Endothelial cell of umbilical vein (primary cell): ENCODE measurements at regions of chr6 and their contacts with region 1.

Region 1: GRCh38 chr6:159008656-159009288 is 8.8 kb upstream of the RSPH3 start:
- DNase-seq: peak; percentile 30
- H3K4me3 ChIP-seq: no peak overlapping the region
- H3K27ac ChIP-seq: no peak overlapping the region
- H3K4me1 ChIP-seq: no peaks in the 10 kb centered on the region
- H3K27me3 ChIP-seq: no peaks in the 10 kb centered on the region
- CTCF ChIP-seq: peak; percentile 14 to 21
- POLR2A ChIP-seq: no peak

Region 2: DNA sequence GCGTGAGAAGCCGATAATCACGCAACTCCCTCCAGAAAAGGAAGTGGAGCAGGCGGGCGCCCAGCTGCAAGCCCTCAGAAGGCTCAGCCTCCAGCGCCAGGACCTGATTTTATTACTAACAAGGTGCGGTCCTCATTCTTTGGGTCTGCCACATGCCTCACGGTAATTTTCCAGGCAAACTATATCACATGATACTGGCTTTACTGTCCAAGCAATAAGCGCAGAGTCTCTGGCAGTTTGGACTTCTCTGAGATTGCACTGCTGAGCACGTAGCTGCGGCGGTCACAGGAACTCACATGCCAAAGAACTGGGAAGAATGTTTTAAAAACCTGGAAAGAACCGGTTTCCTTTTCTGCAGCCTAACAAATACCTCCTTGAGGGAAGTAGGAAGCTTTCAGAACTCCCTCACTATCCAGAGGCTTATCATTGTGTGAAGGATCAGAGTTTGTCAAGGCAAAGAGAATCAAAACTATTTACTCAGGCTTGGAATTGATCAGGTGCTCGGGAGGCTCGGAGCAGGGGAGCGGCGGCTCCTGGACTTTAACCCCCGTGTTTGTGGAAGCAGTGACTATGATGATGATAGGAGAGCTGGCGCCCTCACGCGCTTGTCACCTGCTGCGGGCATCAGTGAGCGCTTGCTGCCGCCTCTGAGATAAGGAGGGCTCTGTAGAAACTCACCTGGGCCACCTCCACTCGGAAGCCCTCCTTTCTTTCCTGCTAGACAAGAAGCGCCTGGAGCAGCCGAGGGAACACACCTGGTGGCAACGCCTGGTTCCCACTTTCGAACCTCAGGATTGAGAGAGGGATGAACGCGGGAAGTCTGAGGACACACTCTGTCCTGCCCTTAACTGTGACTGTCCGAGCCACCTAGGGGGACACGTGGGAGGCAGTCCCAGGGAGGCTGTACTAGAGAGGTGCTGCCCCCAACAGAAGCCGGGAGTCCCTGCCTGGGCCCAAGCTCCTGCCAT is 1054.3 kb before region 1 on chr6:
- CTCF ChIA-PET with region 1: no interaction called
- POLR2A ChIA-PET with region 1: no interaction called
- dilution Hi-C with region 1: no loop called
- intact Hi-C with region 1: no loop called
- DNase-seq: peak; percentile 65
- H3K4me3 ChIP-seq: no peak overlapping the region
- H3K27ac ChIP-seq: no peak overlapping the region
- H3K4me1 ChIP-seq: peaks cover 4% of the 10 kb centered on the region
- H3K27me3 ChIP-seq: no peaks in the 10 kb centered on the region
- CTCF ChIP-seq: no peak
- POLR2A ChIP-seq: no peak

Region 3: DNA sequence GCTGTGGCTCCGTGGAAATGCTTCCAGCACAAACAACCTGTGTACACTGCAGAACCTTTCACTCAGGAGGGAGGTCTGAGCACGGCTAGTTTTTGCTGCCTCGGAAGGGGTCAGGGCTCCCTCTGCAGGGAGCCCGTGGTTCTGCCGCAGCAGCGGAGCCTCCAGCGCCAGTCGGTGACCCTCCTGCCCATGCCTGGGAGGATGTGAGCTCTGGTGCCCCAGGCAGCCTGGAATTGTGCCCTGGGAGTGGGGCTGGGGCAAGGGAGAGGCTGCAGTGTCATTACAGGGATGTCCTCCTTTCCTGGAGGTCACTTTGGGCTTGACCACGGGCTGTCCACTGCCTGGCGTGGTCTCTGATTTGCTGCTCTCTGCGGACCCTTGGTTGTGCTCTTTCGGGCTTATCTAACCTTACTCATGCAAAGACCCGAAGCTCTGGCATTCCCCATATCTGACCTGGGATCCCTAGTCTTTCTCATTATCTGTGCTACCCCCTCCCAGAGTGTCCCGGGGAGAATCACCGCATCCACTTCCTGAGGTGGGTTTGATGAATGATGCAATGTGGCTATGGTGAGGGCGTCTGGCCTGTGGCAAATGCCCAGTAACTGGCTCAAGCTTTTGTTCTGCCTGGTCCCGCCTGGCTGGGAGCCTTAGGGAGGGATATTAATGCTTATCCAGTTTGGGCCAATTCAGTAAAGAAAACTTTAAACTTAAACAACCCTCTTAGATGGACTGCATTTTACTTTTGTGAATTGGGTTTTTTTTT is 95.6 kb after region 1 on chr6:
- CTCF ChIA-PET with region 1: interaction called, 29 read pairs
- POLR2A ChIA-PET with region 1: no interaction called
- dilution Hi-C with region 1: no loop called
- intact Hi-C with region 1: loop called (anchors 1 kb)
- DNase-seq: peak; percentile 40
- H3K4me3 ChIP-seq: no peak overlapping the region
- H3K27ac ChIP-seq: no peak overlapping the region
- H3K4me1 ChIP-seq: no peaks in the 10 kb centered on the region
- H3K27me3 ChIP-seq: peaks cover 0 to 2% of the 10 kb centered on the region in 2 experiments
- CTCF ChIP-seq: peak; percentile 77 to 96
- POLR2A ChIP-seq: no peak